ENCODE measurements at regions of chr19 and their contacts with region 1.

Region 1: DNA sequence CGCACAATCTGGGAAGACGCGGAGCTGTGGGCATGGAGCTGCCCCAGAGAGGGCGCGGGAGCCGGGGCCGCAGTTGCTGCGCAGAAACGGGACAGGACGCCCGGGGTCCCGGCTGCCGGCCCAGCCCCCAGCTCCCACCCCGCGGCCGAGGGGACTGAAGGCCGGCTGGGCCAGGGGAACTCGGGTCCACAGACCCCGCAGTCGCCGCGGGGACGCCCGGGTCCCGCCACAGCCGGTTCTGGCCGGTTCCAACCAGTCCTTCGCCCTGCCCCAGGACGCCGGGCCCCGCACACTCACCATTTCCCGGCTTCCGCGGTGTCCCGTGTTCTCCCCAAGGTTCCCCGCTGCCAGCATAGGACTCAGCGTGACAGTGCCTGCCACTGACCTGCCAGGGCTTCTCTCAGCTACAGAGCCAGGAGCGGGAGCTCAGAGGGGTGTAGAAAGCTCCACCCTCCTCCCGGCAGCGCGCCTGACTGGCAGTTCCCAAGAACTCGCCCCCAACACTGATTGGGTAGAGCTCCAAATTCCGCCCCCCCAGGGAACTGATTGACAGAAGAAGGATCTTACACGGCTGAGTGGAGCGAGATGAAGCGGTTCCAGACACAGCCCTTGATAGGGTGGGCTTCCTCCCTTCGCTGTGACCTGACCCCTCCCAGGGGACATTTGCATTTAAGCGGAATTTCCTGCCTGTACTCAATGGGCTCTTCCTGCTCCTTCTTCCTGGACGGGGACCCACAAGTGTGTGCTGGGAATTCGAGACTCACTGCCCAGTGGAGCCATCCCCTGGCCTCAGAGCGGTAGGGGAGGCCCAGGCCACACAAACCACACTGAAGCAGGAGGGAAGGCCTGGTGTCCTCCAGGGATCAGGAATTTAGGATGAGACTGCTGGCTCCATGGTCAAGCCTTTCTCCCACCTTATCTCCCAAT is at the start of gene ZNF442:
- DNase-seq: peak; percentile 90 to 99 (median 94)

Region 2: DNA sequence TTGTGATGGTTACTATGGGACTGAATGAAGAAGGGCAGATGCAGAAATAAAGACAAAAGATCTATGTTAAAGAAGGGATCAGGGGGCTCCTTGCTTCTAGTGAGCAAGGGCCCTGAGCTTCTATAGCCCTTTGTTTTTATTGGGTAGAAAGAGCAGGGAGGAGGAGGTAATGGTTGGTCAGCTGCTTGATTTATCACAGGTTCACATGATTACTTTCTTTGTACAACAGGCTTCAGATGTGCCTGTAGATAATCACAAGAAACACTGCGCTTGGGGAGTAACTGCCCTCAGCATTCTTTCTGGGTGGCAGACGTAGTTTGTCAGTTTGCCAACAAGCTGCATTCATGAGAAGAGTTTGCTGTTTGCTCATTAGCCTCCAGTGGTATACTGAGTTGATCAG is 521.8 kb before region 1 on chr19:
- intact Hi-C with region 1: no loop called
- DNase-seq: no peak

Region 3: GRCh38 chr19:12318782-12319413 is 46.6 kb before region 1 on chr19:
- intact Hi-C with region 1: no loop called
- DNase-seq: no peak

Region 4: GRCh38 chr19:12400633-12401502 is 35.4 kb after region 1 on chr19 and contains the start of gene ZNF799:
- intact Hi-C with region 1: loop called (anchors 5 kb)
- DNase-seq: peak; percentile 93 to 100 (median 98)